ENCODE measurements at regions of chr15 and their contacts with region 1.

Region 1: DNA sequence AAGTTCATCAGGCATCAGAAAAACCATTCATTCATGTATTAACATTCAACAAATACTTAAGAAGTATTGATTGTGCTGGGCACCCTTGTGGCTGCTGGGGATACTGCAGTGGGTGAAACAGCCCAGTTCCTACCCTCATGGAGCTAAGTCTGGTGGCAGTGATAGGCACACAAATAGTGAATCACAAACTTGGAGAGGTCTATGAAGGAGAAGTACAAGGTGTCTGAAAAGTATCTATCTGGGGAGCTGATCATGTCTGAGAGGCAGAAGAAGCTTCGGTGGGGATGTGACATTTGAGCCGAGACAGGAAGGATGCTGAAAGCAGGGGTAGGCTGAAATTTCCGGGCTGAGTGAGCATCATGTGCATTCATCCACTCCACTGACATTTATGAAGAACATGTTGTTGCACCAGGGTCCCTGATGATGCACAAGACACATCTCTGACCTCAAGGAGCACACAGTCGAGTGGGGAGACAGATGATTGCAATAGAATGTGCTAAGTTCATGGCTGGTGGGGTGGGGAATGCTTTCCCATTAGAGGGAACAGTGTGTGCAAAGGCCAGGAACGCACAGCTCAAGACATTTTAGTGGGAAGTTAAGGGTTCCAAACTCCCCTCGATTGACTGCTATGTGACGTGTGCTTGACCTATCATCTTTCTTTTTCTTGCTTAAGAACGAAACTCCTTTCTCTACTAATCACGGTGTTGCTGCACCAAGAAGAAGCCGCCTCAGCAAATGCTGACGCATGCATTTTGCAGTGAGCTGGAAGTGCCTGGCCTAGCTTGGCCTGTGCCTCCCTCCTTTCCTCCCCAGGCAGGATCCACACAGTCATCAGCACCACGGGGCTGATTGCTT is 309.1 kb upstream of the ICE2 start:
- DNase-seq: peak in 2 of 5 donors; percentile 10 to 54
- H3K4me3 ChIP-seq: no peak overlapping the region
- H3K4me3 Mint-ChIP-seq: peak overlapping the region in 4 of 7 donors; percentile 0 to 38 (median 10)
- H3K27ac ChIP-seq: no peak overlapping the region
- H3K27ac Mint-ChIP-seq: peak overlapping the region in 7 of 8 donors; percentile 1 to 91 (median 66)
- H3K4me1 ChIP-seq: no peaks in the 10 kb centered on the region
- H3K4me1 Mint-ChIP-seq: peaks cover 12 to 34% (median 23%) of the 10 kb centered on the region in 3 donors
- H3K27me3 ChIP-seq: no peaks in the 10 kb centered on the region
- H3K27me3 Mint-ChIP-seq: peaks cover 0 to 3% of the 10 kb centered on the region in 2 donors

Region 2: GRCh38 chr15:60635507-60636352 is 152.3 kb before region 1 on chr15:
- CTCF ChIA-PET with region 1: no interaction called
- POLR2A ChIA-PET with region 1: no interaction called
- DNase-seq: no peak
- H3K4me3 ChIP-seq: no peak overlapping the region
- H3K4me3 Mint-ChIP-seq: peak overlapping the region in 1 of 7 donors; percentile 37
- H3K27ac ChIP-seq: no peak overlapping the region
- H3K27ac Mint-ChIP-seq: peak overlapping the region in 1 of 8 donors; percentile 12
- H3K4me1 ChIP-seq: no peaks in the 10 kb centered on the region
- H3K4me1 Mint-ChIP-seq: peaks cover 17 to 33% (median 22%) of the 10 kb centered on the region in 3 donors
- H3K27me3 ChIP-seq: no peaks in the 10 kb centered on the region
- H3K27me3 Mint-ChIP-seq: no peaks in the 10 kb centered on the region

Region 3: DNA sequence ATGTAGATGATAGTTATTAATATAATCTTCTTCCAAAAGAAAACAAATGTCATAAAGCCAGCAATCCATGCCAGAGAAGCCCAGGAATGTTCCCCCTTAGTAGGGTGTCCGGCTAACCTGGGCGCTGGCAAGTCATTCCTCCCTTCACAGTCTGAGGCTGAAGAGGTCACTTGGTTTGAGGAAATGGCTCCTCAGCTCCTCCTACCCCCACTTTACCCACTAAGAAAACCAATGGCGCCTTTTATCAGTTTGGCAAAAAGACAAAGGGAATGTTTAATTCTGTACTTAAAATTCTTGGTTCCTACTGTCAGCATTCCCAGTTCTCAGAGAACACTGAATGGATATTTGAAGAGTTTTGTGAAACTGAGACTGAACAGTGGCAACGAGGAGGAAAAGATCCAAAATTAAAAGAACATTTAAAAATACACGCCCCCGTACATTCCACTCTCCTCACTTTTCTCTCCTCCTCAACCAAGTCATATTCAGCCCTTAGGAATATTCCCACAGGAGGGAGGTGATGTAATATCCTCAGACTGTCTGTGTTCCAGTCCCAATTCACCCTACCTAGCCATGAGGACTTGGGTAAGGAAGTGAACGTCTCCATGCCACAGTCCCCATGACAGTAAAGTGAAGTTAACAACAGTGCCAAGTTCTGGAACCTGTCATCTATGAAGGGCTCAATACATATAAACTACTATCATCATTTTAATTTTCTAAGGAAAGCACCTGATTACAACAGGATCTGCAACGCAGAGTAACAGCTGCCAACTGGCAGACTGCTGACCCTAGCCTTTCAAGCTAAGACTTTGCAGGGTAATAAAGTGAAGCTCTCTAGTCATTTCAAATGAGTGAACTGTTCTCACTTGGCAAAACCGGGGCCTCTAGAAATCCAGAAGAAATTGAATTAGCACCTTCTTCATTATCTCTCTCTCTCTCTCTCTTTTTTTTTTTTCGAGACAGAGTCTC is 74.7 kb before region 1 on chr15:
- CTCF ChIA-PET with region 1: no interaction called
- POLR2A ChIA-PET with region 1: no interaction called
- DNase-seq: no peak
- H3K4me3 ChIP-seq: no peak overlapping the region
- H3K4me3 Mint-ChIP-seq: no peak overlapping the region
- H3K27ac ChIP-seq: no peak overlapping the region
- H3K27ac Mint-ChIP-seq: no peak overlapping the region
- H3K4me1 ChIP-seq: no peaks in the 10 kb centered on the region
- H3K4me1 Mint-ChIP-seq: peaks cover under 1 to 10% (median 7%) of the 10 kb centered on the region in 3 donors
- H3K27me3 ChIP-seq: no peaks in the 10 kb centered on the region
- H3K27me3 Mint-ChIP-seq: no peaks in the 10 kb centered on the region

Region 4: DNA sequence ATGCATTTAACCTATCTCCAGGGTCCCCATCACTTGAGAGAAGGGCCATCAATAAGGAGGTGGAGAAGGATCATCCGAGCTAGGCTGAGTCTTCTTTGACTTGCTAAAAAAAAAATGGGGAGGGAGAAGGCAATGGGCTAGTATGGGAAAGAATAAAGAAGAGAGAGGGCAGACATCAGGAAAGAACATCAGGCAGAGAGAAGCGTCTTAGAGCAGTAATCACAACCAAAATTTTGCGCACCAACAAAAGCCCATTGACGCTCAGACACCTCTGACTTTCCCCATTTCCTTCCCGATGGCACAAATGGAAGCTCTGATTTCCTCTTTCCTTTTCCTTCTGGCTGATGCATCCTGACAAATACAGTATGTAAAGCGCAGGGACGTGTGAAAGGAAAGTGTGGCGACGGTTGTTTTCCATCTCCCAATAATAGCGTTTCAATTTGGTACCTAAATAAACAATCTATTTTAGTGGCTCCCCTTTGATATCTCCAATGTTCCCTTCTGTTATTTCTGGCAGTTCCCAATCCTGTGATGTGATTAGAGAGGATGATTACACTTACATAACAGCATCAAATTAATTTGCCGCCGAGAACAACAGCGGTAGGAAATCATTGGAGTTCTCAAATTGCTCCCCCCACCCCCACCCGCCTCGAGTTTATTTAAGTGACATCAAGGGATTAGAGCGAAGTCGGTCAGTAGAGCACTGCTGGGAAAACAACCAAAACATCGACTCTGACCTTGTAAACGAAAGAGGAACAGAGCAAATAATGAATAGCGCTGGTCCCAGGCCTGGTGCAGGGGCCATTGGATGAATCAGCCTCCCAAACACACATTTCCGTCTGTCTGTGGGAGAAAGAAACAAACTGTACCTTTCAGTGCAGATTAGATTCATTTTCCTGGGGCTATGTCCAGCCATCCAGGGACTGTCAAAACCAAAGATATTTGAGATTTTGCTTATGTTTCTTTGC is 35.8 kb before region 1 on chr15:
- CTCF ChIA-PET with region 1: no interaction called
- POLR2A ChIA-PET with region 1: no interaction called
- DNase-seq: no peak
- H3K4me3 ChIP-seq: no peak overlapping the region
- H3K4me3 Mint-ChIP-seq: no peak overlapping the region
- H3K27ac ChIP-seq: no peak overlapping the region
- H3K27ac Mint-ChIP-seq: no peak overlapping the region
- H3K4me1 ChIP-seq: no peaks in the 10 kb centered on the region
- H3K4me1 Mint-ChIP-seq: no peaks in the 10 kb centered on the region
- H3K27me3 ChIP-seq: no peaks in the 10 kb centered on the region
- H3K27me3 Mint-ChIP-seq: no peaks in the 10 kb centered on the region

Region 5: DNA sequence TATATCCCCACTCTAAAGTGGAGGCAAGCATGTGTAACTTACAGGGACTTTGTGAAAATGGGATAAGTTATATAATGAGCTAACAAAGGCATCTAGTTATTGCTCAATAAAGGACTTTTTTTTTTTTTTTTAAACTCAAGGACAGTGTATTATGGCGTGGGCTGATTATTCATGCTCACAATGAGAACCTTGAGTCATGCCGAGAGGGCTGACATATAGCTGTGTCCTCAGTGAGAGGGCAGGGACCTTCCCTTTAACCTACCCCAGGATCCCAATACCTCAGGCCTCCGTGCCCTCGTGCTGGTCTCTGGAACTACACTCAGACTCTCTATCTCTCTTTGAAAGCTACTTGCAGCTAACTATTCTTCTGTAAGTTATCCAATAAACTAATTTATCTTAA is 10.8 kb after region 1 on chr15:
- CTCF ChIA-PET with region 1: interaction called, 17 read pairs
- POLR2A ChIA-PET with region 1: interaction called, 3 read pairs
- DNase-seq: no peak
- H3K4me3 ChIP-seq: no peak overlapping the region
- H3K4me3 Mint-ChIP-seq: peak overlapping the region in 1 of 7 donors; percentile 22
- H3K27ac ChIP-seq: no peak overlapping the region
- H3K27ac Mint-ChIP-seq: peak overlapping the region; percentile 43 to 95 (median 78)
- H3K4me1 ChIP-seq: peaks cover 55% of the 10 kb centered on the region
- H3K4me1 Mint-ChIP-seq: peaks cover 65 to 93% (median 72%) of the 10 kb centered on the region in 3 donors
- H3K27me3 ChIP-seq: no peaks in the 10 kb centered on the region
- H3K27me3 Mint-ChIP-seq: no peaks in the 10 kb centered on the region

Measured in CD8-positive, alpha-beta memory T cell (primary cell).